ENCODE measurements at regions of chr19 and their contacts with region 1.

Region 1: GRCh38 chr19:47391510-47392223 is 27.7 kb downstream of the MEIS3 start:
- DNase-seq: peak; percentile 88
- ATAC-seq: peak; percentile 93
- H3K4me3 Mint-ChIP-seq: no peak overlapping the region
- H3K27ac Mint-ChIP-seq: no peak overlapping the region
- H3K4me1 Mint-ChIP-seq: peaks cover 4% of the 10 kb centered on the region
- H3K27me3 Mint-ChIP-seq: peaks cover 8% of the 10 kb centered on the region

Region 2: GRCh38 chr19:47284324-47284899 is 107.3 kb before region 1 on chr19:
- CTCF ChIA-PET with region 1: interaction called, 10 read pairs
- POLR2A ChIA-PET with region 1: no interaction called
- DNase-seq: peak; percentile 68
- ATAC-seq: peak; percentile 43
- H3K4me3 Mint-ChIP-seq: no peak overlapping the region
- H3K27ac Mint-ChIP-seq: no peak overlapping the region
- H3K4me1 Mint-ChIP-seq: peaks cover 7% of the 10 kb centered on the region
- H3K27me3 Mint-ChIP-seq: no peaks in the 10 kb centered on the region

Region 3: GRCh38 chr19:47296036-47296435 is 95.6 kb before region 1 on chr19:
- CTCF ChIA-PET with region 1: interaction called, 49 read pairs
- POLR2A ChIA-PET with region 1: no interaction called
- DNase-seq: peak; percentile 89
- ATAC-seq: peak; percentile 95
- H3K4me3 Mint-ChIP-seq: no peak overlapping the region
- H3K27ac Mint-ChIP-seq: no peak overlapping the region
- H3K4me1 Mint-ChIP-seq: peaks cover 13% of the 10 kb centered on the region
- H3K27me3 Mint-ChIP-seq: no peaks in the 10 kb centered on the region

Region 4: DNA sequence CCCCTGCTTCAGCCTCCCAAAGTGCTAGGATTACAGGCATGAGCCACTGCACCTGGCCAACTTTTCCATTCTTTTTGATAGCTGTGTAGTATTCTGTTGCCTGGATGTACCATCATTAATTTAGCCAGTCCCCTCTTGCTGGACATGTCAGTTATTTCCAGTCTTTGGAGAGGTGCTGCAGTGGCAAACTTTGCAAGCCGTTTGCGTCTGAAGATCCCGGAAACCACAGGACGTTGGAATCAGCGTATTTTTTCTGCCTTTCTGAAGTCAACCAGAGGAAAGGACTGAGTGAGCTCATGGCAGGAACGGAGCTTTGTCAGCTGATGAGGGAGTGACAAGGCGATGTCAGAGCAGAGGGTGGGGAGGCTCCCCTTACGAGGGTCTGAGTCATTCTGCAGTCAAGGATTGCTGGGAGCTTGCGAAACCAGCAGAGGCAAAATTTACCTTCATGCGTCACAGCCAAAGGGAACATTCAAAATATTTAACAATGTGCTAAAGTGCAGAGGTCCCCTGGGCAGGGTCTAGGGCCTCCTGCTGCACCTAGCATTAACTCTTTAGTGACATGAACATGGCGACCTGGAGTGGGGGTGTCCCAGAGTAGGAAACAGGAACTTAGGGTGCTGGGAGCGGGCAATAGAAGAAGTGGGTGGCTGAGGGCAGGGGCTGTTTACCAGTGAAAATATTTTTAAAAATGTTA is 76.4 kb before region 1 on chr19:
- CTCF ChIA-PET with region 1: no interaction called
- POLR2A ChIA-PET with region 1: no interaction called
- DNase-seq: no peak
- ATAC-seq: no peak
- H3K4me3 Mint-ChIP-seq: no peak overlapping the region
- H3K27ac Mint-ChIP-seq: no peak overlapping the region
- H3K4me1 Mint-ChIP-seq: no peaks in the 10 kb centered on the region
- H3K27me3 Mint-ChIP-seq: peaks cover 7% of the 10 kb centered on the region